MCF 10A (cell line): ENCODE measurements at regions of chr4 and their contacts with region 1.

Region 1: DNA sequence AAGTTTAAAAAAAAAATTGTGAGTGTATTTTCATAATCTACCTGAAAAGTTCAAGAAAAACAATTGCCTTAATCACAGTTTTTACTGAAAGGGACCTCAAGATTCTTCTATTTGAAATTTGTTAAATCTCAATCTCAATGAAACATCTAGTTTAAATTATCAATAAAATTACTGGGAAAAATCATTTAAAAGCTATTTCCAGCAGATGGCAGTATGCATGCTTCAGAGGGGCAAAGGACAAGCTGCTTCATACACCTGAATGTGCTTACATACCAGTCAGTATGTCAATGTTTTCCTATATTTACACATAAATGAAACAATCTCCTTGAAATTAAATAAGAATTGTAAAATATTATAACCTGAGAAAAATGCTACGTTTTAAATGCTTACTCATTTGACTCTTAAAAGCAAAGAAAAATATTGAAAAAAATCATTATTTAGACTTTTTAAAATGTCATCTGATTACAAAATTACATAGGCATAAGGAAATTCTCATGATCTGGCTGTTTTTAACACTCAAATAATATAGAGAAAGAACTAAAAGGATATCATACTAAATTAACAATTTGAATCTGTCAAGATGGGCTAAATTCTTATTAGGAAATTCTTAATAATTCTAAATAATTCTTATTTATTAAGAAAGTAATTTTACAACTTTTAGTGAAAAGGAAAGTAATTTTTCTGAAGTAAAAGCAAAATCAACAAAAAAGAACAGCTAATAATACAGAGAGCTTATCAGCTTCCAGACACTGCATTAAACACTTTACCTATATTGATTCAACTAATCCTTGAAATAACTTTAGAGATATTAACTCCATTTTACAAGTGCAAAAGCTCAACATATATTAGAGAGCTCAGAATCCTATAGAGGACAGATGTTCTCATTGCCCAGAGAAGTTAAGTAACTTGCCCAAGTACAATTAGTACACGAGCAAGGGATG is 242.1 kb downstream of the ADAMTS3 start:
- DNase-seq: peak; percentile 53
- H3K4me3 Mint-ChIP-seq: no peak overlapping the region
- H3K27ac Mint-ChIP-seq: no peak overlapping the region
- H3K4me1 Mint-ChIP-seq: no peaks in the 10 kb centered on the region
- H3K27me3 Mint-ChIP-seq: no peaks in the 10 kb centered on the region
- CTCF ChIP-seq: peak; percentile 53

Region 2: GRCh38 chr4:72302981-72303704 is 23.8 kb before region 1 on chr4:
- CTCF ChIA-PET with region 1: interaction called, 13 read pairs
- POLR2A ChIA-PET with region 1: no interaction called
- intact Hi-C with region 1: no loop called
- DNase-seq: peak; percentile 66
- H3K4me3 Mint-ChIP-seq: no peak overlapping the region
- H3K27ac Mint-ChIP-seq: no peak overlapping the region
- H3K4me1 Mint-ChIP-seq: no peaks in the 10 kb centered on the region
- H3K27me3 Mint-ChIP-seq: no peaks in the 10 kb centered on the region
- CTCF ChIP-seq: peak; percentile 58

Region 3: GRCh38 chr4:72340803-72341431 is 14.0 kb after region 1 on chr4:
- CTCF ChIA-PET with region 1: interaction called, 12 read pairs
- POLR2A ChIA-PET with region 1: no interaction called
- intact Hi-C with region 1: no loop called
- DNase-seq: peak; percentile 11
- H3K4me3 Mint-ChIP-seq: no peak overlapping the region
- H3K27ac Mint-ChIP-seq: no peak overlapping the region
- H3K4me1 Mint-ChIP-seq: no peaks in the 10 kb centered on the region
- H3K27me3 Mint-ChIP-seq: no peaks in the 10 kb centered on the region
- CTCF ChIP-seq: no peak

Region 4: GRCh38 chr4:72432282-72432681 is 105.3 kb after region 1 on chr4:
- CTCF ChIA-PET with region 1: interaction called, 20 read pairs
- POLR2A ChIA-PET with region 1: no interaction called
- intact Hi-C with region 1: no loop called
- DNase-seq: no peak
- H3K4me3 Mint-ChIP-seq: no peak overlapping the region
- H3K27ac Mint-ChIP-seq: no peak overlapping the region
- H3K4me1 Mint-ChIP-seq: peaks cover 6% of the 10 kb centered on the region
- H3K27me3 Mint-ChIP-seq: no peaks in the 10 kb centered on the region
- CTCF ChIP-seq: no peak

Region 5: GRCh38 chr4:72496112-72496511 is 169.2 kb after region 1 on chr4:
- CTCF ChIA-PET with region 1: interaction called, 23 read pairs
- POLR2A ChIA-PET with region 1: no interaction called
- intact Hi-C with region 1: loop called (anchors 1 kb)
- DNase-seq: peak; percentile 20
- H3K4me3 Mint-ChIP-seq: no peak overlapping the region
- H3K27ac Mint-ChIP-seq: no peak overlapping the region
- H3K4me1 Mint-ChIP-seq: no peaks in the 10 kb centered on the region
- H3K27me3 Mint-ChIP-seq: no peaks in the 10 kb centered on the region
- CTCF ChIP-seq: peak; percentile 25